ENCODE measurements at regions of chr10 and their contacts with region 1.

Region 1: DNA sequence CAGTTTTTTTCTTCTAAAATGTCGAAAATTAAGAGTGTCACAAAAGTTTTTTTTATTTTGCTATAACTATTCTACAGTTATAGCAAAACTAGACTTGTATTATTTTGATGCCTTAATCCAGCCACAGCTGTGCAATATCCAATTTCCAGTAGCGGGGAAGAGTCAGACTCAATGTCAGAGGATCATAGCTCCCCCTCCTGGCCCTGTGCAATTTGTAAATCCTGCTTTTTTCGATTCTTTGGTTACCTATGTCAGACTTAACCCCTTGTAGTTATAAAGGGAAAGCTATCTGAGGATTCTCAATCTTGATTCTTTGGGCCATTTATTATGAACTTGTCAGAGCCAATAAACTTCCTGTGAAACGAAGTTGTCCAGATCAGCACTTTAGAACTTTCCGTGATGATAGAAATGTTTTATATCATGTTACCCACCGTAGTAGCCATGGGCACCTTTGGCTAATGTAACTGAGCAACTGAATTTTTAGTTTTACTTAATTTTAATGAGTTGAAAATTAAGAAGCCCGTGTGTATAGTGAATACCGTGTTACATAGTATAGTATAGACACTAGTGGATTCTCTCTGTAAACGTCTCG is 87.7 kb upstream of the PRKCQ start:
- DNase-seq: peak; percentile 38
- H3K4me3 ChIP-seq: no peak overlapping the region
- H3K27ac ChIP-seq: no peak overlapping the region
- H3K4me1 ChIP-seq: peaks cover 11% of the 10 kb centered on the region
- H3K27me3 ChIP-seq: peaks cover 0 to 4% of the 10 kb centered on the region in 2 experiments
- CTCF ChIP-seq: peak; percentile 49
- POLR2A ChIP-seq: no peak

Region 2: DNA sequence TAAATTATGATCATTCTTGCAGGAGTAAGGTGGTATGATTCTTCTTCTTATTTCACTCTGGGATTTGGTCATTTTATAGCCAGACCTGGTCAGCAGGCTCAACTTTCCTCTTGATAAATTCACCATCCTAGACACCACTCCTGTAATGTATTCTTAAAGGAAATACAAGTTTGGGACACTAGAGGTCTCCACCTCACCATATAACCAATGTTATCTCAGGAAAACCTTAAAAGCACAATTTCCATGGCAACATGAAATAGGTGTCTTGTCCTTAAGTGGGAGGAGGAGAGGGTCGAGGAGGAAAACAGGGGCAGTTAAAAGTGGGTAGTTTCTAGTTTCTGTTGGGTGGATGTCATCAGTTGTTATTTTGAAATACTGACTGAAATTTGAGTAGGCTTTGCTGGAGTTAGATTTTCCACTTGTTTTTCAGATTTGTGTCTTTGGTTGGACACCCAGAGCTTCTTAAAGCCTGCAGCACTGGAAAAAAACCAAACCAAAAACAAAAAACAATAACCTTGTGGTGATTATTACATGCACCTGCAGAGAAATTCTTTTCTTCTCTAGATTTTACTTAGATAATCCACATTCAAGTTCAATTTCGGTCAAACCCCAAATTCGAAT is 250.8 kb before region 1 on chr10:
- CTCF ChIA-PET with region 1: interaction called, 24 read pairs
- POLR2A ChIA-PET with region 1: no interaction called
- dilution Hi-C with region 1: no loop called
- intact Hi-C with region 1: loop called (anchors 1 kb)
- DNase-seq: peak; percentile 71
- H3K4me3 ChIP-seq: no peak overlapping the region
- H3K27ac ChIP-seq: no peak overlapping the region
- H3K4me1 ChIP-seq: no peaks in the 10 kb centered on the region
- H3K27me3 ChIP-seq: peaks cover 6 to 7% of the 10 kb centered on the region in 2 experiments
- CTCF ChIP-seq: peak; percentile 39 to 44
- POLR2A ChIP-seq: no peak

Region 3: DNA sequence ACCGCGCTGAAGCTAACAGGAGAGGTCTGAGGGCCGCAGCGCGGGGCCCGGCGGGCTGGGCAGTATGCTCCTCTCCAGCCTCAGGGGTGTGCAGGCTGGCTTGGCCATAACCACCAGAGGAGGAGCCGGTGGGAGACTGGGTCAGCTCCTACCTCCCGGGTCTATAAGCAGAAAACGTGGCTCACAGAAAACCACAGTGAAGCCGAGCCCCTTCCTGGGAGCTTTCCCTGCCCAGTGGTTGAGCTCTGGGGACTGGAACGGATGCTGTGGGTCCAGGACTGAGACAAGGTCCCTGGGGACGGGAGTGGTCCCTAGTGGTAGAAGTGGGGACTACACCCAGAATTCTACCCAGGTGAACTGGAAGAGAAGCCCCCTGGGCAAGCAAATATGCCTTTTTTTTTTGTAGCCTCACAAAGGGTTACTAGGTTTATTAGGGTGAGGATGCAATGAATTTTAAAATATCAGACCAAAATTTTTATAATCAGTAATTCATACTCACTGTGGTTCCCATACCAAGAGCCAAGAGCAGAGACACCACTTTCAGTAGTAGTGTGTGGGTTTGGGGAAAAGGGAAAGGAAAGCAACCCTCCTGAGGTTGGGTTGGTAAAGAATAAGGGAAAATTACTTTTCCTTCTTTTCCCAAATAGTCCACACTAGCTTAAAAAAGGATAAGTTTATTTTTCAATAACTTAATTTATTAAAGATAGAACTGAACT is 19.8 kb before region 1 on chr10:
- CTCF ChIA-PET with region 1: interaction called, 10 read pairs
- POLR2A ChIA-PET with region 1: no interaction called
- dilution Hi-C with region 1: no loop called
- intact Hi-C with region 1: no loop called
- DNase-seq: peak; percentile 15
- H3K4me3 ChIP-seq: no peak overlapping the region
- H3K27ac ChIP-seq: no peak overlapping the region
- H3K4me1 ChIP-seq: no peaks in the 10 kb centered on the region
- H3K27me3 ChIP-seq: no peaks in the 10 kb centered on the region
- CTCF ChIP-seq: peak; percentile 48 to 73
- POLR2A ChIP-seq: no peak

Region 4: DNA sequence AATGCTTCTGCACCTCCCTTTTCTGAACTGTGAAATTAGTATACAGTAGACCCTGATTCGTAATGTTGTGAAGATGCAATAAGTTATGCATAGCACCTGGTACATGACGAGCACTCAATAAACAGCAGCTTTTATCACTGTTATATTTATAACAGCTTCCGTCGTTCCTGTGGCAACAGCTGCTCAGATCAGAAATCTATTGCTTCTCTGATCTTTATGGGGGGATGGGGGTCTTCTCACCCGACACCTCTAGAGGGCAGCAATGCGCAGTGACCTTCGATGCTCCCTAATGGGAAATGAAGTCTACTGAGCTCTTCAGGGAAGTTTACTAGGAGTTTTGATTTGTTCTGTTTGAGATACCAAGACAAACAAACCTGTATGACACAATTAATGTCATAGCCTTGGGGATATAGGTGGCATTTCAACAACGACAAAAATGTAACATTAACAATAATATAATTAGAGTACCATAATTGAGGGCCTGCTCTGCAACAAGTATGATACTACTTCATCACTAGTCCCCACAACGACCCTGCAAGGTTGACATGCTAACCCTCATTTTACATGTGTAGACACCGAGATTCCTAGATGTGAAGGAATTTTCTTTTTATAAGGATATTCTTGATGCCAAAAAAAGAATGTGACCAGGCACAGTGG is 453.5 kb after region 1 on chr10:
- CTCF ChIA-PET with region 1: no interaction called
- POLR2A ChIA-PET with region 1: no interaction called
- dilution Hi-C with region 1: no loop called
- intact Hi-C with region 1: loop called (anchors 5 kb)
- DNase-seq: peak; percentile 25
- H3K4me3 ChIP-seq: no peak overlapping the region
- H3K27ac ChIP-seq: no peak overlapping the region
- H3K4me1 ChIP-seq: no peaks in the 10 kb centered on the region
- H3K27me3 ChIP-seq: no peaks in the 10 kb centered on the region
- CTCF ChIP-seq: peak; percentile 62 to 66
- POLR2A ChIP-seq: no peak

Region 5: DNA sequence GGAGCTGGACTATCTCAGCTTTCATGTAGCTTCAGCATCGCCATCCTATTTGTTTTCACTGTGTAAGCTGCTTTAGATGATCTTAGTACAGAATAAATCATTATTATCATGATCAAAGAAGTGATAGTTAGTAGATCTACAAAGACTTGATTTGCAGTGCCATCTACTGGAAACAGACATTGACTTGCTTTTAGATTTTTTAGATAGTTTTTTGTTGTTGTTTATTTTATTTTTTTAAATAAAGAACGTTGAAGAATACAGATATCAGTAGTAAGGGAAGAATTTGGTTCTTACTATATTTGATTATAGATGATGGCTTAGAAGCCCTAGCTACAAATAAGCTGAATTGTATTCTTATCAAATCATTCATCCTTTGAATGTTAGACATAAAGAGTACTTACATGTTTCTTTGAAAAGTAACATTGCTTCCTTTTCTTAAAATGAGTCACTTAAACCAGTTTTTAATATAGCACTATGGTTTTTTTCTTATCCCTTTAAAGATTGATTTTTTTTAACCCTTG is 749.4 kb after region 1 on chr10:
- CTCF ChIA-PET with region 1: interaction called, 20 read pairs
- POLR2A ChIA-PET with region 1: no interaction called
- dilution Hi-C with region 1: no loop called
- intact Hi-C with region 1: loop called (anchors 1 kb)
- DNase-seq: peak; percentile 58
- H3K4me3 ChIP-seq: no peak overlapping the region
- H3K27ac ChIP-seq: no peak overlapping the region
- H3K4me1 ChIP-seq: no peaks in the 10 kb centered on the region
- H3K27me3 ChIP-seq: peaks cover 27 to 29% of the 10 kb centered on the region in 2 experiments
- CTCF ChIP-seq: peak in 1 of 2 donors; percentile 14
- POLR2A ChIP-seq: no peak

Measured in endothelial cell of umbilical vein (primary cell).